ENCODE measurements at regions of chr6 and their contacts with region 1.

Region 1: GRCh38 chr6:84422380-84422968 is 195.0 kb upstream of the CEP162 start:
- DNase-seq: peak; percentile 55 to 75 (median 62)
- ATAC-seq: peak; percentile 100
- H3K4me3 ChIP-seq: no peak overlapping the region
- H3K27ac ChIP-seq: no peak overlapping the region
- H3K4me1 ChIP-seq: no peaks in the 10 kb centered on the region
- H3K27me3 ChIP-seq: no peaks in the 10 kb centered on the region
- CTCF ChIP-seq: peak; percentile 89 to 96 (median 91)
- EP300 ChIP-seq: no peak
- POLR2A ChIP-seq: no peak
- RAD21 ChIP-seq: peak; percentile 94 to 95

Region 2: GRCh38 chr6:84123186-84123585 is 299.3 kb before region 1 on chr6:
- CTCF ChIA-PET with region 1: no interaction called
- POLR2A ChIA-PET with region 1: no interaction called
- in situ Hi-C with region 1: no loop called
- intact Hi-C with region 1: no loop called
- DNase-seq: no peak
- ATAC-seq: no peak
- H3K4me3 ChIP-seq: no peak overlapping the region
- H3K27ac ChIP-seq: no peak overlapping the region
- H3K4me1 ChIP-seq: no peaks in the 10 kb centered on the region
- H3K27me3 ChIP-seq: no peaks in the 10 kb centered on the region
- CTCF ChIP-seq: no peak
- EP300 ChIP-seq: no peak
- POLR2A ChIP-seq: no peak
- RAD21 ChIP-seq: no peak

Region 3: GRCh38 chr6:84249724-84250123 is 172.8 kb before region 1 on chr6:
- CTCF ChIA-PET with region 1: no interaction called
- POLR2A ChIA-PET with region 1: no interaction called
- in situ Hi-C with region 1: no loop called
- intact Hi-C with region 1: loop called (anchors 5 kb)
- DNase-seq: no peak
- ATAC-seq: peak; percentile 49; the same call in 2 of the 3 replicates
- H3K4me3 ChIP-seq: no peak overlapping the region
- H3K27ac ChIP-seq: no peak overlapping the region
- H3K4me1 ChIP-seq: no peaks in the 10 kb centered on the region
- H3K27me3 ChIP-seq: no peaks in the 10 kb centered on the region
- CTCF ChIP-seq: no peak
- EP300 ChIP-seq: no peak
- POLR2A ChIP-seq: no peak
- RAD21 ChIP-seq: no peak

Region 4: DNA sequence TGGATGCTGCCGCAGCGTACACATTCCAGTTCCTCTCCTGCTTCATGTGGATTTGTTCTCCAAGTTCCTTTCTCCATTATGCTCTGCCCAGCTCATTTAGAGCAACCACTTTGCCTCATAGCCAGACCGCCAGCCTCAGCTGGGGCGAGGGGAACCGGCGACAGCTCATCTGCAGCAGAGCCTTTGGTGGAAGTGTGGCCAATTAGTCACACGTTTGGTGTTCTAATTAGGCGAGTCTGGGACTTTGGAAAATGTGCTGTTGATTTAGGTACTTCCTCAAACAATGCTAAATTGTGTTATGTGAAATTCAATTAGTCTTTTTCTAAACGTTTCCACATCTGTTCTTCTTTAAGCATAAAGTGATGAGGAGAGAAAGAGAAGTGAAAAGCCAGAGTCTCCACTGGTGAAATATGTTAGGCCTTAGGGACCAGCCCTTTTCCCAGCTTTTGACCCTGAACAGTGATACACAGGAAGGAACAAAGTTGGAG is 124.0 kb after region 1 on chr6:
- CTCF ChIA-PET with region 1: no interaction called
- POLR2A ChIA-PET with region 1: no interaction called
- in situ Hi-C with region 1: no loop called
- intact Hi-C with region 1: loop called (anchors 1 kb)
- DNase-seq: no peak
- ATAC-seq: no peak
- H3K4me3 ChIP-seq: no peak overlapping the region
- H3K27ac ChIP-seq: no peak overlapping the region
- H3K4me1 ChIP-seq: peaks cover 0 to 11% of the 10 kb centered on the region in 2 experiments; a peak in 4 of 5 replicates
- H3K27me3 ChIP-seq: 0 out of 5 replicates have a peak, but pooled peaks cover 0 to 5% of the 10 kb centered on the region in 2 experiments
- CTCF ChIP-seq: no peak
- EP300 ChIP-seq: no peak
- POLR2A ChIP-seq: no peak
- RAD21 ChIP-seq: no peak

Region 5: DNA sequence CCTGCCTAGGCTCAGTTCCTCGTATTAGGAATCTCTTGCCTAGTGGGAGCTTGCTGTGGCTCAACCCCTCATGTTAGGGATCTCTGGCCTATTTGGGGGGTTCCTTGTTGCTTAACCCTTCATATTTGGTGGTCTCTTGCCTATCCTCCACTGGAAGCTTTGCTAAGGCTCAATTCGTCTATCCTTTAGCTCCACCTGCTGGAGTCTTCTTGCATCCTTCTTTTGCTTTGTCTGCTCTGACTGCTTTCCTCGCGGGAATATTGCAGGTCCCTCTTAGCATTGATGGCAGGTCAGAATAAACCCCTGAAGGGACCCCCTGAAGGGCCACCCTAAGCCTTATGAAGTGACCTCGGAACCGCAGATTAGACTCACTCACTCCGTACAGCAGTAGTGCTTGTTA is 544.9 kb after region 1 on chr6:
- CTCF ChIA-PET with region 1: interaction called, 3 read pairs
- POLR2A ChIA-PET with region 1: no interaction called
- in situ Hi-C with region 1: no loop called
- intact Hi-C with region 1: loop called (anchors 1 kb)
- DNase-seq: peak; percentile 32 to 65 (median 36)
- ATAC-seq: peak; percentile 90
- H3K4me3 ChIP-seq: no peak overlapping the region
- H3K27ac ChIP-seq: no peak overlapping the region
- H3K4me1 ChIP-seq: no peaks in the 10 kb centered on the region
- H3K27me3 ChIP-seq: peaks cover 0 to 5% of the 10 kb centered on the region in 2 experiments; a peak in 2 of 5 replicates
- CTCF ChIP-seq: peak; percentile 62 to 74 (median 65)
- EP300 ChIP-seq: no peak
- POLR2A ChIP-seq: no peak
- RAD21 ChIP-seq: peak; percentile 83 to 89

Region 6: DNA sequence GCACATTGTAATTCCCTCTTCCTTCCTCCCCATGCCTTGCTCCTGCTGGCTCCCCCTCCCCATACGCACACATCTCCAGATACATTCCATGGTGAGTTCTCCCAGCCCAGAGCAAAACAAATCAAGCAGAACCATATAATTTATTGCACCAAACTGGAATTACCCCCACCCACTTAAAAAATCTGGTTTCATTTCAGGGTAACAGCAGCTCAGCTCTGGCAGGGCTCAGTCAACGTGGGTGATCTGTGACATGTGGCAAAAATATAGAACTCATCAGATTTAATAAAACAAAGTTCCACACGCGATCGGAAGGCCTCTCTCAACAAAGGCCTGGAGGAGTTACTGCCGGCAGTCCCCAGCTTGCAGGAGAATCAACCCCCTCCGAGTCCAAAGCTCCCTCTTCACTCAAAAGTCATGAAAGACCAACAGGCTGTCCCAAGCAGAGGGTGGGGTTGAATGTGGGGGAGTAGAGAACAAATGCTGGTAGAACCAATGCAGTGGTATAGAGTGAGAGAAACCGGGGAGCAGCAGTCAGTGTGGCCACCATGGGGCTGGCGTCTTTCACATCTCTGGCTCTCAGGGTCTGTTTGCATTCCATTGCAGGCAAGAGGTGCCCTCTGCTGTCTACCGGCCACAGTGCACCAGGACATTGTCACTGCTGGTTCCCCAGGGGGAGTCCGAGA is 704.2 kb after region 1 on chr6:
- CTCF ChIA-PET with region 1: interaction called, 3 read pairs
- POLR2A ChIA-PET with region 1: no interaction called
- in situ Hi-C with region 1: no loop called
- intact Hi-C with region 1: loop called (anchors 2 kb)
- DNase-seq: peak; percentile 39 to 62 (median 48)
- ATAC-seq: peak; percentile 100
- H3K4me3 ChIP-seq: no peak overlapping the region
- H3K27ac ChIP-seq: no peak overlapping the region
- H3K4me1 ChIP-seq: no peaks in the 10 kb centered on the region; a peak in 1 of 5 replicates
- H3K27me3 ChIP-seq: no peaks in the 10 kb centered on the region
- CTCF ChIP-seq: peak; percentile 81 to 89 (median 82)
- EP300 ChIP-seq: no peak
- POLR2A ChIP-seq: no peak
- RAD21 ChIP-seq: peak; percentile 89 to 93